ENCODE measurements at regions of chr19 and their contacts with region 1.

Region 1: DNA sequence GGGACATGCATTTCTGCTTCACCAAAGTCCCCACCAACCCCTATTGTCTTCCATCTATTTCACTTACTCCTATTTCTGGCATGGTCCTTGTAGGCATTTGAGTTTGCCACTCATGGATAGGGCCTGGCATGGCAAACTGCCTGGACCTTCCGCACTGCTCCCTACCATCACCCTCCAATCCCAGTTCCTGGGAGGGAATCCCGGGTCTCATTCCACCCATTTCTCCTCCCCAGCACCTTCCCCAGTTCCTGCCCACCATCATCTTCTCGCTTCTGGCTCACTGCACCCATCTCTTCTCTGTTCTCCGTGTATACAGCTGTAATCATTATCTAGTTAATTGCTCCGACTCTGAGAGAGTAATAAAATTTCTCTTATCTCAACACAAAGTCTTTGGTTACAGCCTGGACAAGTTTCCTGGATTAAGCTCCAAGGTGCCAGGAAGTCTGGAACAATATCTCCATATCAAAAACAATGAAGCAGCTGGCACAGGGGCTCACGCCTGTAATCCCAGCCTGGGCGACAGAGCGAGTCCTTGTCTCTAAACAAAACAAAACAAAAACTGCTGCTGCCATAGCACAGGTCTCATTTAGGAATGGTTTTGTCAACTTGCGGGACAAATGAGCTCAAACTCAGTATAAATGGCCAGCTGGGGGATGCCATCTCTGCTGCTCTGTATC is 17.0 kb upstream of the COX7A1 start:
- DNase-seq: no peak
- ATAC-seq: peak; percentile 39

Region 2: GRCh38 chr19:35995048-35995993 is 173.9 kb before region 1 on chr19 and contains the start of gene SDHAF1:
- intact Hi-C with region 1: loop called (anchors 10 kb)
- DNase-seq: peak; percentile 99
- ATAC-seq: peak; percentile 95
- total RNA-seq, gene SDHAF1: 9.7 TPM

Region 3: GRCh38 chr19:36060430-36060829 is 108.8 kb before region 1 on chr19:
- intact Hi-C with region 1: loop called (anchors 1 kb)
- DNase-seq: no peak
- ATAC-seq: peak; percentile 81

Region 4: DNA sequence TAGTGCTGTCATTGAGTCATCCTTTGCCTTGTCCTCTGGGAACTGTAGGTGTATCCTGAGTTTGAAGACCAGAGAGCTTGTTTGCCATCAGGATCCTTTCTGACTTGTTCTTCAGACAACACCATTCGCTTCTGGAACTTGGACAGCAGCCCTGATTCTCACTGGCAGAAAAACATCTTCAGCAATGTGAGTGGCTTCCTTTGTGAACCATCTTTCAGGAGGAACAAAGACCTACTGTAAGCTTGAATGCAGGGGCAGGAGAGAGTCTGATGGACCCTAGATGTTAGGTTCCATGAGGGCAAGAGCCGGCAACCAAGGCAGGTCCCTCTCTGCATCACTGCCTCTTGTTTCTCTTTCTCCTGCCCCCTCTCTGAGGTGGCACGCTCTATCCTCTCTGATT is 87.8 kb before region 1 on chr19:
- intact Hi-C with region 1: no loop called
- DNase-seq: no peak
- ATAC-seq: no peak

Region 5: DNA sequence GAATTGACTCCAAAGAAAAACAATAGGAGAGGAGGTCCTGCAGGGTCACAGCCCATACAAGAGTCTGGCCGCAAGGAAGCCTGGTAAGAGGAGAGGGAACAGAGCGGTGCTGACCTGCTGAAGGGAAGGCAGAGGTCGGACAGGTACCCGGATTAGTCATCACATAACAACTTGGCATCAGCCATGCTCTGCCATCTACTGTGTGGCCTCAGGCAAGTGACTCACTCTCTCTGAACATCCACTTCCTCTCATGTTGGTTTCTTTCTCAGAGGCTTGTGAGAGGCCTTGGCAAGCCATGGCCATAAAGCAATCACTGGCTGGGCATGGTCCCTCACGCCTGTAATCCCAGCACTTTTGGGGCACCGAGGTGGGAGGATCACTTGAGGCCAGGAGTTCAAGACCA is 36.7 kb before region 1 on chr19:
- intact Hi-C with region 1: loop called (anchors 1 kb)
- DNase-seq: no peak
- ATAC-seq: no peak

Region 6: GRCh38 chr19:36152352-36153091 is 16.7 kb before region 1 on chr19 and contains the start of gene COX7A1:
- intact Hi-C with region 1: loop called (anchors 1 kb)
- DNase-seq: peak; percentile 87
- ATAC-seq: peak; percentile 91
- total RNA-seq, gene COX7A1: 3,337 TPM

Region 7: DNA sequence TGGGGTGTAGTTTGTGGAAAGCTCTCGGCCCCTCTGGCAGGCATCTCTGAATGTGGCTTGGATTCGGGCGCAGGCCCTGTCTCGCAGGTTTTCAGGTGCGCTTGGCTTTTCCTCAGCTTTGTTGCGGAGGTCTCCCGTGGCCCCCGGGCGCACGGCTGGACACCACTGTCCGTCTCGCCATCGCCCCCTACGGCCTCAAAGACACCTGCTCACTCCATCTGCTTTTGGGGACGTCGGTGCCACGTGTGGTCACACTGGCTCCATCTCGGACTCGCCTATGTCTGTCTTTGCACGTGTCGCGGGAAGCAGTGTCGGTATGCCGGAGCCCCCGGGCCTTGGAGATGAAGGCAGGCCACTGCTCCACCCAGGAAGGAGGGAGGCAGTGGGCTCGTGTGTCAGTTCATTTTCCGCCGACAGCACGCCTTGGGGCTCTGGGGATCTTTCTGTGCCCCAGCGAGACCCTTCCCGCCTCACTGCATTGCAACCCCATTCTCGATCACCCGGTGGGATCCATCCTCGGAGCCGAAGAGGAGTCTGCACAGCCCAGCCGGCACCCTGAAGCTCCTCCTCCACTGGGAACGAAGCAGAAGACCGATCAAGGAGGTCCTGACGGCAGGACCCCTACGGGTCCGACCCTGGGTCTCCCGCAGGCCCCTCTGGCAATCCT is 87.8 kb after region 1 on chr19:
- intact Hi-C with region 1: no loop called
- DNase-seq: no peak
- ATAC-seq: no peak

Measured in Right ventricle myocardium inferior (tissue), 1 donor.